ENCODE measurements at regions of chr2 and their contacts with region 1.

Region 1: DNA sequence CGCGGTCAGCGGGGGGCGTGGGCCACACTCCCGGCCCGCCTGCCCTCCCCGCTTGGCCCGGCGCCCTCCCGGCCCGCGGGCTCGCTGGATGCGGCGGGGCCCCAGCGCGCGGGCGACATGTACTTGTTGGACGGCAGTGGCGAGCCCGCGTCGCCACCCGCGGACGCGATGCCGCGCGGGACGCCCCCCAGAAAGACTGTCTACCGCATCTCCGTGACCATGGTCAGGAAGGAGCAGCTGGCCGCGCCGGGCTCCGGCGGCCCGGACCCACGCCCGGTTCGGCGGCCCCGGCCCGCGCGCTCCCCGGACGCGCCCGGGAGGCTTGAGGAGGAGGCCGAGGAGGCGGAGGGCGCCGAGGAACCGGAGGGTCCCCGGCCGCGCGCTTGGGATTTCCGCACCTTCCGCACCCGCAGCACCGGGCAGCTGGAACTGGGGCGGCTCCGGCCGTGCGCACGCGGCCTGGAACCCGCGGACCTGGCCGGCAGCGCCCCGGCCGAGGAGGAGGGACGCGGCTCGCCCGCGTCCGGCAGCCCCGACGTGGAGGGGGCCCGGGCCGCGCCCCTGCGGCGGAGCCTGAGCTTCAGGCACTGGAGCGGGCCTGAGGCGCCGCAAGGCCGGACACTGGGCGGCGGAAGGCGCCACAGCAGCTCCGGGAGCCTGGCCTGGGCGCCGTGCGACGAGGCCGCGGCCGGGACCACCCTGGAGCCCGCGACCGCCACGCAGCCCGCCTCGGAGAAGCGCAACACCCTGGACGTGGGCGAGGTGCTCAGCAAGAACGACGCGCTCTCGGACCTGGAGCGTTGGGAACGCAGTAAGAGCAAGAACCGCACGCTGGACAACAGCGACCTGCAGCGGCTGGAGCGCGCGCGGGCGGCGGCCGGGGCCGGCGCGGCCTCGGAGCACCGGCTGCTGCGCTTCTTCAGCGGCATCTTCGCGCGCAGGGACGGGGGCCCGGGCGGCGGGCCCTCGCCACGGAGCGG is 176.4 kb downstream of the AGAP1 start:
- DNase-seq: no peak
- ATAC-seq: no peak
- H3K4me3 Mint-ChIP-seq: no peak overlapping the region
- H3K27ac Mint-ChIP-seq: no peak overlapping the region
- H3K4me1 Mint-ChIP-seq: no peaks in the 10 kb centered on the region
- H3K27me3 Mint-ChIP-seq: peaks cover 42% of the 10 kb centered on the region
- CTCF ChIP-seq: no peak

Region 2: GRCh38 chr2:236168110-236169067 is 498.1 kb after region 1 on chr2 and contains the start of gene GBX2:
- CTCF ChIA-PET with region 1: no interaction called
- POLR2A ChIA-PET with region 1: no interaction called
- intact Hi-C with region 1: loop called (anchors 10 kb)
- DNase-seq: no peak
- ATAC-seq: no peak
- H3K4me3 Mint-ChIP-seq: no peak within 1 kb of the TSS
- H3K27ac Mint-ChIP-seq: no peak within 1 kb of the TSS
- H3K4me1 Mint-ChIP-seq: peaks cover 13% of the 10 kb centered on the region
- H3K27me3 Mint-ChIP-seq: peaks cover 58% of the 10 kb centered on the region
- CTCF ChIP-seq: no peak
- total RNA-seq, gene GBX2: not detected